ENCODE measurements at regions of chr15 and their contacts with region 1.

Region 1: DNA sequence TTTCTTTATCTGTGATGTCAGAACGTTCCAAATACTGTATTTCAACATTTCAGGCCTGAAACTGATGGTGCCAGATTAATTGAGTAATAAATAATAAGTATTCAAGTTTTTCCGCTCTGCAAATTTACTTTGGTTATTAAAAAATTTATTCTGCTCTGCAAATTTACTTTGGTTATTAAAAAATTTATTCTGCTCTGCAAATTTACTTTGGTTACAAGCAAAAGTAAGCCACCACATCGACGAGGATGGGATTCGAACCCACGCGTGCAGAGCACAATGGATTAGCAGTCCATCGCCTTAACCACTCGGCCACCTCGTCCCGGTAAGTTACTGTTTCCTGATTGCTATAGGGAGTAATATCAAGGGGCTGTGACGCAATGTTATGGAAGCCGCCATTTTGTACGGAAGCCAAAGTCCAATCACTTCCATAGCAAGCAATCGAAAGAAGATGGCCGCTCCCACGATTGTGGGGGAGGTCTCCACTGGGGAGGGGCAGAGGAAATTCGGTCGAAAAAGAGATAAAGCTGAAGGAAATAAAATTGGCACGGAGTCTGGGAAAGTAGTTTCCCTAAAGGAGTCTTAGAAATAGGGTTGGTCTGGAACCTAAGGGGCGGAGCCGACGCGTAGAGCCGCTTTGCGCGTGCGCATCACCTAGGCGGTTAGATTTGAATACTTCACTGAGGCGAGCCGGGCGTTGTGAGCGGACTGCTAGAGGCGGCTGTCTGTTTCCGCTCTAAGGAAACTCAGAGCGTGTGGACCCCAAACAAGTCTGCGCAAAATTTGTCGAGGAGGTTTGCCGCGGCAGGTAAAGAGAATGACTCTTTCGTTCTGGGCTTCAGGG is at the start of gene KNL1:
- DNase-seq: peak; percentile 94
- ATAC-seq: peak; percentile 86
- H3K4me3 Mint-ChIP-seq: peak within 1 kb of the TSS; percentile 87
- H3K27ac Mint-ChIP-seq: peak within 1 kb of the TSS; percentile 95
- H3K4me1 Mint-ChIP-seq: peaks cover 24% of the 10 kb centered on the region
- H3K27me3 Mint-ChIP-seq: peaks cover 6% of the 10 kb centered on the region
- total RNA-seq, gene KNL1: 26.2 to 33.5 TPM

Region 2: GRCh38 chr15:40481341-40482074 is 112.3 kb before region 1 on chr15:
- CTCF ChIA-PET with region 1: no interaction called
- POLR2A ChIA-PET with region 1: no interaction called
- intact Hi-C with region 1: no loop called
- DNase-seq: no peak
- ATAC-seq: no peak
- H3K4me3 Mint-ChIP-seq: no peak overlapping the region
- H3K27ac Mint-ChIP-seq: no peak overlapping the region
- H3K4me1 Mint-ChIP-seq: no peaks in the 10 kb centered on the region
- H3K27me3 Mint-ChIP-seq: peaks cover 7% of the 10 kb centered on the region

Region 3: GRCh38 chr15:40564591-40565332 is 29.0 kb before region 1 on chr15 and contains the start of gene CCDC32:
- CTCF ChIA-PET with region 1: interaction called, 13 read pairs
- POLR2A ChIA-PET with region 1: no interaction called
- intact Hi-C with region 1: loop called (anchors 1 kb)
- DNase-seq: peak; percentile 97
- ATAC-seq: peak; percentile 97
- H3K4me3 Mint-ChIP-seq: peak within 1 kb of the TSS; percentile 96
- H3K27ac Mint-ChIP-seq: peak within 1 kb of the TSS; percentile 93
- H3K4me1 Mint-ChIP-seq: peaks cover 44% of the 10 kb centered on the region
- H3K27me3 Mint-ChIP-seq: no peaks in the 10 kb centered on the region
- total RNA-seq, gene CCDC32: 14.2 to 24.5 TPM